Lower lobe of right lung (tissue), 2 donors: ENCODE measurements at regions of chr12 and their contacts with region 1.

Region 1: DNA sequence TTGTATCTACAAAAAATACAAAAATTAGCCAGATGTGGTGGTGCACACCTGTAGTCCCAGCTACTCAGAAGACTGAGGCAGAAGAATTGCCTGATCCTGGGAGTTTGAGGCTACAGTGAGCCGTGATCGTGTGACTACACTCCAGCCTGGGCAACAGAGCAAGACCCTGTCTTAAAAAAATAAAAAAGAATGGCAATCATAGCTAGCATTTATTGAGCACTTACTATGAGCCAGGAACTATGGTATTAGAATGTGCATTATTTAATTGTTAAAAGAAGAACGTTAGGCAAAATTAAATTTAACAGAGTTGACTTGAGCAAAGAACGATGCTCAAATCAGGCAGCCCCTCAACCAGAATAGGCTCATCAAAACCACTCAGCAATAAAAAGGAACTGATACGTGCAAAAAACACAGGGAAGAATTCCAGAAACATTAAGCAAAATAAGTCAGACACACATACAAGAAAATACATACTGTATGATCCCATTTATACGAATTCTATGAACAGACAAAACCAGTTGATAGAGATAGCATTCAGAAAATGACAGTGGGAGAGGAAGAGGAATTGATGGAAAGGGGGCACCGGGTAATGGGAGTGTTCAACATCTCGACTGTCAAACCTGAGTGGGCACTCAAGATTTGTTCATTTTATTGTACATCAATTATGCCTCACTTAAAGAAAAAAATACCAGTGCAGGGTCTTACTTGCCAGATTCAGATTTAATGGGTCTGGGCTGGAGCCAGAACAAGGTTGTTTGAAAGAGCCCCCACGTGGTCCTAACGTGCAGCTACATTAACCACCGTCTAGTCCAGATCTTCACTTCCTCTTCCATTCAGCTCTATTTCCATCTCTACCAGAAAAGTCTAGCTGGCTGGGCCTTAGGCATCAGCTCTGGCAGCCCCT is 8.0 kb downstream of the SCNN1A start:
- DNase-seq: peak; percentile 44
- ATAC-seq: no peak
- H3K4me3 ChIP-seq: no peak overlapping the region
- H3K27ac ChIP-seq: peak overlapping the region; percentile 49
- H3K4me1 ChIP-seq: peaks cover 78% of the 10 kb centered on the region
- H3K27me3 ChIP-seq: no peaks in the 10 kb centered on the region
- CTCF ChIP-seq: peak; percentile 39

Region 2: DNA sequence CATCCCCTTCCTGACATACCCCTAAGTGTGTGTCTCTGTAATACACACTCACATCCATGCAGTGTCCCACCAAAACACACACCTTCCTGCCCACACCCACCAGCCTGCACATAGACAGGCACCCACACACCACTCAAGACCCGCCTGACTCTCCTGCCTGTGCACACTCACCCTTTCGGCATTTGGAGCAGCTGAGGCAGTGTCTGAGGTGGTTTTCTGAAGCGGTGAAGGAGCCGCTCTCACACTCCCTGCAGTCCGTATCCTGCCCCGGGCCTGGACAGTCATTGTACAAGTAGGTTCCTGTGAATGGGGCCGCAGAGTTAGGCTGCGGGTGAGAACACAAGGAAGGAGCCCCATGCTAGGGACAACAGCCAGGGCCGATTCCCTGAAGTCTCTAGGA is 33.8 kb before region 1 on chr12:
- intact Hi-C with region 1: loop called (anchors 5 kb)
- DNase-seq: no peak
- ATAC-seq: no peak
- H3K4me3 ChIP-seq: no peak overlapping the region
- H3K27ac ChIP-seq: peak overlapping the region; percentile 96
- H3K4me1 ChIP-seq: peaks cover 93% of the 10 kb centered on the region
- H3K27me3 ChIP-seq: no peaks in the 10 kb centered on the region
- CTCF ChIP-seq: no peak